Panc1 (cell line): ENCODE measurements at regions of chr20 and their contacts with region 1.

Region 1: DNA sequence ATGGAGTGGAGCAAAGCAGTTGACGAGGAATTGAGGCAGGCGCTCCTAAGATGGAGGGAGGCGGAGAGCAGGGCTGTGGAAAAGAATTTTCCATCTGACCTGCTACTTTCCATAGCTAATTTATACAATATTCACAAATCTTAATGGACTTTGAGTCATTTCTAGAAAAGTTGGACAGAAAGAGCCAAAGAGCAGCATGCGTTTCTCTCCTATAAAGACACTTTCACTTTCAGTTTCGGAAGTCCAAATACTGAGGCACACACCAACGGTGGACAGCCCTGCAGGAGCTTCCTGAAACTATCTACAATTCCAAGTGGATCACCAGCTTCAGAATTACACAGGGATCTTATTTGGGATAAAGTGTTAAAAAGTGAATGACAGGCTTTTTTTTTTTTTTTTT is 43.5 kb downstream of the PANK2 start:
- DNase-seq: no peak
- ATAC-seq: no peak
- H3K4me3 ChIP-seq: peak overlapping the region; percentile 15 to 32; a peak in 3 of 4 replicates
- H3K27ac ChIP-seq: peak overlapping the region; percentile 83
- H3K4me1 ChIP-seq: peaks cover 14% of the 10 kb centered on the region
- H3K27me3 ChIP-seq: no peaks in the 10 kb centered on the region
- CTCF ChIP-seq: no peak

Region 2: GRCh38 chr20:3888622-3889488 is 43.8 kb before region 1 on chr20 and contains the start of gene PANK2:
- CTCF ChIA-PET with region 1: no interaction called
- POLR2A ChIA-PET with region 1: no interaction called
- in situ Hi-C with region 1: no loop called
- intact Hi-C with region 1: no loop called
- DNase-seq: peak; percentile 96
- ATAC-seq: peak; percentile 97
- H3K4me3 ChIP-seq: peak within 1 kb of the TSS; percentile 86 to 98
- H3K27ac ChIP-seq: peak within 1 kb of the TSS; percentile 98
- H3K4me1 ChIP-seq: peaks cover 28% of the 10 kb centered on the region
- H3K27me3 ChIP-seq: no peaks in the 10 kb centered on the region
- CTCF ChIP-seq: no peak
- total RNA-seq, gene PANK2: 40.9 TPM

Region 3: GRCh38 chr20:4369798-4370124 is 437.1 kb after region 1 on chr20:
- CTCF ChIA-PET with region 1: no interaction called
- POLR2A ChIA-PET with region 1: interaction called, 11 read pairs
- in situ Hi-C with region 1: no loop called
- intact Hi-C with region 1: no loop called
- DNase-seq: no peak
- ATAC-seq: no peak
- H3K4me3 ChIP-seq: no peak overlapping the region
- H3K27ac ChIP-seq: no peak overlapping the region
- H3K4me1 ChIP-seq: no peaks in the 10 kb centered on the region
- H3K27me3 ChIP-seq: no peaks in the 10 kb centered on the region
- CTCF ChIP-seq: no peak